ENCODE measurements at regions of chr10 and their contacts with region 1.

Region 1: DNA sequence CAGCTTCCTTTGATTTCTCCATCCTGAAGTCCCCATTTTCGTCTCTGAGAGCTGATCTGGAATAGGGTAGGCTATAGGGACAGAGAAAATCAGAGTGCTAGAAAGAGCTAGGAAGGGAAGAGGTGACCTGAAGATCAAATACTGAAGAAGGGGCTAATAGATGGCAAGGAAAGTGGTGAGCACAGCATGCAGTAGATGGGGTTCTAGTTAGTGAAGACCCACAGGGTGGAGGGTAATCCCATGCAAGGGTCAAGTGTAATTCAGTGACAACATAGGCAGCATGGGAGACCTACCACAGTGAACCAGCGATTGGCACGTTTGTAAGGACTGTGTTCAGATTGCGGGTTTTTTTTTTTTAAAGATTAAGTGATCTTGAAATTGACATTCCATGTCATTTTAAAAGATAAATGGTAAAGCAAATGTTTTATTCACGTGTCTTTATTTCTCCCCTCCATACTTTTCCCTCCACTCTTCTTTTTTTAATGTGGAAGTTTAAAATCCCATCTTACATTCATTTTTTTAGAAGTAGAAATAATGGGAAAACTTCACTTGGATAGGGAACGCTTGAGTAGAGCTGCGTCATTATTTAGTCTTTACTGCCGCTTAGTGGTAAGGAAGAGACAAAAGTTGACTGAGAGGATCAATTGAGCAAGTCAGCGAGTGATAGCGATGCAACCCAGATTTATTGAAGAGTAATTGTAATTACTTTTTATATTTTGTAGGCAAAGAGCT is 21.0 kb upstream of the ABI1 start:
- DNase-seq: peak in 4 of 14 experiments; percentile 22 to 78 (median 60)
- ATAC-seq: peak; percentile 92
- H3K4me3 ChIP-seq: no peak overlapping the region
- H3K4me3 Mint-ChIP-seq: no peak overlapping the region
- H3K27ac ChIP-seq: no peak overlapping the region
- H3K27ac Mint-ChIP-seq: no peak overlapping the region
- H3K4me1 ChIP-seq: no peaks in the 10 kb centered on the region
- H3K4me1 Mint-ChIP-seq: no peaks in the 10 kb centered on the region
- H3K27me3 ChIP-seq: peaks cover 0 to 4% of the 10 kb centered on the region in 2 experiments
- H3K27me3 Mint-ChIP-seq: peaks cover 12% of the 10 kb centered on the region
- CTCF ChIP-seq: peak; percentile 85

Region 2: DNA sequence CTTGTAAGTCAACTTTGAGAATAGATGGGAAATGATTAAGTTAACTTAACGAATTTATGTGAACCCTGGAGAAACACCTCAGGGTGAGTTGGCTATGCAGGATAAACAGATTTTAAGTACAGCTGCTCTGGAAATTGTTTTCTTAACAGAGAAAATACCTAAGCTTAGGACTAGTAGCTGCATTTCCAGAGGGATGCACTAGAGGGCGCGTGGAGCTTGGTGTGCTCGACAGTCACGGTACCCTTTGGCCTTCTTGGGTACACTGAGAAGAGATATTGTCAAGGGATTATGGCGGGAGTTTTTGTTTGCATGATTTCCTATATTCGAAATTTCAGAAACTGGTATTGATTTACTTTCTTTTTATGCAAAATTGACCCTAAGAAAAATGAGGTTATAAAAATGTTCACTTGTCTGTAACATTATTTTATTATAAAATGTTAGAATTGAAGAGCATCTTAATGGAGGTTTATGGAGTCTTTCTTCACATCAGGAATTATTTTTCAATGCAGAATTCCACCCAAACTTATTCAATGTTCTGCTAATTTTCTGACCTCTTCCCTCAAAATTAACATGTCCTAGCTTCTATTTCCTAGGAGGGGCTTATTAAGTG is 1006.1 kb before region 1 on chr10:
- CTCF ChIA-PET with region 1: no interaction called
- POLR2A ChIA-PET with region 1: no interaction called
- intact Hi-C with region 1: loop called in 1 of 2 experiments (anchors 5 kb)
- DNase-seq: peak; percentile 27 to 70 (median 51)
- ATAC-seq: peak; percentile 55
- H3K4me3 ChIP-seq: no peak overlapping the region
- H3K4me3 Mint-ChIP-seq: no peak overlapping the region
- H3K27ac ChIP-seq: no peak overlapping the region
- H3K27ac Mint-ChIP-seq: no peak overlapping the region
- H3K4me1 ChIP-seq: no peaks in the 10 kb centered on the region
- H3K4me1 Mint-ChIP-seq: no peaks in the 10 kb centered on the region
- H3K27me3 ChIP-seq: no peaks in the 10 kb centered on the region
- H3K27me3 Mint-ChIP-seq: peaks cover 5% of the 10 kb centered on the region
- CTCF ChIP-seq: peak; percentile 88

Region 3: GRCh38 chr10:26612151-26612915 is 269.4 kb before region 1 on chr10:
- CTCF ChIA-PET with region 1: no interaction called
- POLR2A ChIA-PET with region 1: no interaction called
- intact Hi-C with region 1: loop called in 1 of 2 experiments (anchors 2 kb)
- DNase-seq: no peak
- ATAC-seq: no peak
- H3K4me3 ChIP-seq: no peak overlapping the region
- H3K4me3 Mint-ChIP-seq: no peak overlapping the region
- H3K27ac ChIP-seq: no peak overlapping the region
- H3K27ac Mint-ChIP-seq: no peak overlapping the region
- H3K4me1 ChIP-seq: no peaks in the 10 kb centered on the region
- H3K4me1 Mint-ChIP-seq: no peaks in the 10 kb centered on the region
- H3K27me3 ChIP-seq: no peaks in the 10 kb centered on the region
- H3K27me3 Mint-ChIP-seq: no peaks in the 10 kb centered on the region
- CTCF ChIP-seq: no peak

Region 4: DNA sequence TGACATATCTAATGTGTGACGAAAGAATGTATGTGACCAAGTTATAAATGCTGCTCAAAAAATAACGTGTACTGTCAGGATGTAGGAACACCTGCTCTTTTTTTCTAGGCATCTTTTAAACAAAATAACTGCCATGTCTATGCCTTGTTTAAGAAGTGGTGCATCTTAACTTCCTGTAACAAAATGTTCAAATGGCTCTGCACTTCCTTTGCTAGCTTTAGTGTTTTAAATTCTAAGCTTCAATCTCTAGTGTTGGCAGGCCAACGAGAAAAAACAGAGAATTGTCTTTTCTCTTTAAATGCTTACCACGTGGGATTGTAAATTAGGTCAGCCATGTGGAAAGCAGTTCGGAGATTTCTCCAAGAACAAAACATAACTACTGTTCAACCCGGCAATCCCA is 198.8 kb before region 1 on chr10:
- CTCF ChIA-PET with region 1: no interaction called
- POLR2A ChIA-PET with region 1: no interaction called
- intact Hi-C with region 1: loop called (anchors 1 to 5 kb)
- DNase-seq: peak in 3 of 14 experiments; percentile 62 to 68 (median 63)
- ATAC-seq: peak; percentile 91
- H3K4me3 ChIP-seq: no peak overlapping the region
- H3K4me3 Mint-ChIP-seq: peak overlapping the region; percentile 11
- H3K27ac ChIP-seq: peak overlapping the region; percentile 28 to 50
- H3K27ac Mint-ChIP-seq: peak overlapping the region; percentile 83
- H3K4me1 ChIP-seq: no peaks in the 10 kb centered on the region
- H3K4me1 Mint-ChIP-seq: peaks cover 50% of the 10 kb centered on the region
- H3K27me3 ChIP-seq: no peaks in the 10 kb centered on the region
- H3K27me3 Mint-ChIP-seq: peaks cover 4% of the 10 kb centered on the region
- CTCF ChIP-seq: no peak

Region 5: DNA sequence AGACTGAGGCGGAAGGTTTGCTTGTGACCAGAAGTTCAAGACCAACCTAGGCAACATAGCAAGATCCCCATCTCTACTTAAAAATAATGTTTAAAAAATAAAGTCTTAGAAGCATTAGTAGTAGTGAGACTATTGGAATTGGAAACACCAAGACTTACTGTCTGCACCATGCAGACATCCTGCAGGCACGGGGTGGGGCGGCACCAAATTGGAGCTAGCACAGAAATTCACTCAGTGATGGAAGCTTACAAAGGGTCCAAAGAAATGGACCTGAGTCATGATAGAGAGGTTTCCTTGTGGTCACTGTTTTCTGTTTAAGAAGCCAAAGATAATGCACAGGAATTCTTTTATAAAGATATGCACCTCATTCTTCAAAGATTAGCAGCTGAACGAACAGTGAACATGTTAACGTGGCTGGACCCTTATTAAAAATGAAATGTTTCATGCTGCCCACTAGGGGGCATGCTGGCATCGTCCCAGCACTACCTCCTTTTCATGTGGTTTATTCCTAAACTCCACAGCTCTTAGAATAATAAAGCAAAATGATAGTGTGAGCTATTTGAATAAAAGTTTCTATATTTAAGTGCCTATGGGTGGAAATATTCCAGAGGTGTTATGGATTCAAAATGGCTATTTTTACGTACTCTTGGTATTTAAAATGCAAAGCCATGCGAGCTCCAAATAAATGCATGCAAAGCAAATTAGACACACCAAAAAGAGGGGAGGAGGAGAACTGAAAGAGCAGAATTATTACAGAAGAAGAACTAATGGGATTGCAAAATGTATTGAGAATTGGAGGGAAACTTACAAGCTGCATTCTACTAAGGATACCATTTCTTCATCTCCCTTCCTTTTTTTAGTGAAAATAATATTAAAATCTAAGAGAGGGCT is 155.7 kb before region 1 on chr10:
- CTCF ChIA-PET with region 1: interaction called, 31 read pairs
- POLR2A ChIA-PET with region 1: interaction called, 11 read pairs
- intact Hi-C with region 1: loop called (anchors 1 kb)
- DNase-seq: peak; percentile 16 to 79 (median 38)
- ATAC-seq: peak; percentile 59
- H3K4me3 ChIP-seq: no peak overlapping the region
- H3K4me3 Mint-ChIP-seq: no peak overlapping the region
- H3K27ac ChIP-seq: no peak overlapping the region
- H3K27ac Mint-ChIP-seq: no peak overlapping the region
- H3K4me1 ChIP-seq: peaks cover 7% of the 10 kb centered on the region
- H3K4me1 Mint-ChIP-seq: peaks cover 9% of the 10 kb centered on the region
- H3K27me3 ChIP-seq: no peaks in the 10 kb centered on the region
- H3K27me3 Mint-ChIP-seq: no peaks in the 10 kb centered on the region
- CTCF ChIP-seq: peak; percentile 93